ENCODE measurements at regions of chr12 and their contacts with region 1.

Region 1: DNA sequence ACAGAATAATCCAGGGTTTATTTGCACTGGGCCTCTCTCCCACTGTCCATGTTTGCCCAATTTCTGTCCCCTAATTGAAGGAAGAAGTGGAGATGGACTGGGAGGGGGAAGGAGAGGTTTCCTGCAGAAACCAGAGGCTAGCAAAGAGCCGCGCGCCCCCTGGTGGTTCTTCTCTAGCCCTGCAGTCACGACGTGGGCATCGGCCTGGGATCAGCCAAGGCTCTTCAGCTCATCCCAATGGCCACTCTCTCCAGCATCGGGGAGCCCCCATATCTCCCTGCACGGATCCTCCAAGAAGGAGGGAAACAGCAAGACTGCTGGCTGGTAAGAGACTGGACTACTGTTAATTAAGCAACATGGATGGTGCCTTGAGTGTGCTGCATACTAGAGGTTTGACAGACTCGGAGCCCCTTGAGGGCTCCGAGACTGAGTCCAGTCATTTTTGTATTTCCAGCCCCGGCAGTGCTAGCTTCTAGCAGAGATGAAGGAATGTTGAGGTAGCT is 18.7 kb downstream of the ZBTB39 start:
- DNase-seq: peak; percentile 67 to 85
- ATAC-seq: peak; percentile 82 to 91 (median 89)
- H3K4me3 ChIP-seq: no peak overlapping the region
- H3K4me3 Mint-ChIP-seq: peak overlapping the region; percentile 56
- H3K27ac ChIP-seq: no peak overlapping the region
- H3K27ac Mint-ChIP-seq: no peak overlapping the region
- H3K4me1 ChIP-seq: peaks cover 17% of the 10 kb centered on the region
- H3K4me1 Mint-ChIP-seq: peaks cover 8 to 15% of the 10 kb centered on the region in 2 donors
- H3K27me3 ChIP-seq: no peaks in the 10 kb centered on the region
- H3K27me3 Mint-ChIP-seq: peaks cover 3 to 12% of the 10 kb centered on the region in 2 donors
- CTCF ChIP-seq: peak; percentile 93

Region 2: DNA sequence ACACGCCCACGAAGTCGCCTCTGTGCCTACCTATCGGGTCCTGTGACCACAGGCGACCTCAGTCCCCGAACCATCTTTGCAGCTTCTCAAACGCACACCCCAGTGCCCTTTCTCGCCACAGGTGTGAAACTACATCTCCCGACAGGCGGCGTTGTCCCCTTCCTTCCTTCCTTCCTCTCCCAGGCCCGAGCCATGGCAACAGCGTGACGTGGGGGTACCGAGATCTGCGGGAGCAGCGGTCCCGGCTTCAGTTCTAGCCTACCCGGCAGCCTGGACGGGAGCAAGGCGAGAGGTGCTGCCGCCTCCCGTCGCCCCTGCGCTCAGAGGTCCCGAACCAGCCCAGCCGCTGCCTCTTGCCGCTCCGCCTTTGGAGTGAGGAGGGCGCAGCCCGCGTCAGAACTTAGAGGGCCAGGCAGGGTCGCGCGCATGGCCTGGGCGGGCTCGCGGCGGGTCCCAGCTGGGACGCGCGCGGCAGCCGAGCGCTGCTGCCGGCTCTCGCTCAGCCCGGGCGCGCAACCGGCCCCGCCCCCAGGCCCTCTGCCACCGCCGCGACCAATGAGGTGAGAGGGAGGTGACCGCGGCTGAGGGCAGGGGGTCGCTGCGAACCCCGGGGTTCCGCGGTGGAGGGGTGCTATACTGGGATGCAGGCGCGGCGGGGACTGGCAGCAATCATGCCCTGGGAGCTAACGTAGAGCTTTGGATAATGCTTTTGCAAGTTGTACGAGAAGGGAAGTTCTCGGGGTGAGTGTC is 720.7 kb before region 1 on chr12 and contains the start of gene COQ10A:
- intact Hi-C with region 1: no loop called
- DNase-seq: peak; percentile 86 to 95
- ATAC-seq: peak; percentile 91 to 98 (median 91)
- H3K4me3 ChIP-seq: peak within 1 kb of the TSS; percentile 88
- H3K4me3 Mint-ChIP-seq: peak within 1 kb of the TSS; percentile 95
- H3K27ac ChIP-seq: peak within 1 kb of the TSS; percentile 99
- H3K27ac Mint-ChIP-seq: peak within 1 kb of the TSS; percentile 94 to 95
- H3K4me1 ChIP-seq: peaks cover 16% of the 10 kb centered on the region
- H3K4me1 Mint-ChIP-seq: peaks cover 9 to 20% of the 10 kb centered on the region in 2 donors
- H3K27me3 ChIP-seq: no peaks in the 10 kb centered on the region
- H3K27me3 Mint-ChIP-seq: no peaks in the 10 kb centered on the region
- CTCF ChIP-seq: peak; percentile 46
- total RNA-seq, gene COQ10A: 27.2 to 37.9 (median 30.2) TPM

Region 3: GRCh38 chr12:56510786-56511185 is 476.8 kb before region 1 on chr12:
- intact Hi-C with region 1: loop called (anchors 5 kb)
- DNase-seq: no peak
- ATAC-seq: no peak
- H3K4me3 ChIP-seq: no peak overlapping the region
- H3K4me3 Mint-ChIP-seq: no peak overlapping the region
- H3K27ac ChIP-seq: no peak overlapping the region
- H3K27ac Mint-ChIP-seq: no peak overlapping the region
- H3K4me1 ChIP-seq: no peaks in the 10 kb centered on the region
- H3K4me1 Mint-ChIP-seq: peaks cover 6% of the 10 kb centered on the region in 2 donors
- H3K27me3 ChIP-seq: no peaks in the 10 kb centered on the region
- H3K27me3 Mint-ChIP-seq: peaks cover 10 to 25% of the 10 kb centered on the region in 2 donors
- CTCF ChIP-seq: no peak